CD8-positive, alpha-beta T cell (primary cell): ENCODE measurements at regions of chr14 and their contacts with region 1.

Region 1: DNA sequence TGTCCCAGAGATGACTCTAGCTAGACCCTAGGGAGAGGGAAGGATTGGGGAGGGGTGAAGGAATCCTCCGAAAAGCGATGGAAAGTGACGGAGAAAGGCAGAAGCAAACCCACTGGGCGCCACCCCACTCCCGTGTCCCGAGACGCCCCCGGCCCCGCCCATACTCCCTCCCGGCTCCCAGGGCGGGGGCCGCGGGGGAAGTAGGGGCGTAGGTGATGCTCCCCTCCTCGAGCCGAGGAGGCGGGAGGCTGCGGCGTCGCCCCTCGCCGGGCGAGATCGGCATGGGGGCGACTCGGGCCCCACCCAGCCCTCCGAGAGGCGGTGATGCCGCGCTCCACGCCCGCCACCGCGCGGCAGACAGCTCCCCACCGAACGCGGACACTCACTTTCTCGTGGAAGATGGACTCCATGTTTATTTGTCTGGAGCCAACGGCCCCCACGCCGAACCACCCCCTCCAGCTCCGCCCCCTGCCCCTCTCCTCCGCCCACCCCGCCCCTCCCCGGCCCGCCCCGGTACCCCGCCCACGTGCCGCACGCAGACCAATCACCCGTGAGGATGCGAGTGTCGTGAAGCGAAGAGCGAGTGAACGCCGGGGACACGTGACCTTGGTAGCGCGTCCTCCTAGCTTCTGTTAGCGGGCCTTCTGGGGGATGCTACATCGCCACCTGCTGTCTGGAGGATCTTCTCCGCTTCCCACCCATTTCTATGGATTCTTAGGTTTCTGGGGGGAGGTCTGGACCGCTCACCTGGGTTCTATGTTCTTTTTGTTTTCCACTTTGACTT is at the start of gene ATXN3:
- DNase-seq: peak; percentile 88 to 99 (median 95)
- ATAC-seq: peak; percentile 87
- H3K4me3 ChIP-seq: peak within 1 kb of the TSS; percentile 88 to 96
- H3K4me3 Mint-ChIP-seq: peak within 1 kb of the TSS; percentile 95
- H3K27ac ChIP-seq: peak within 1 kb of the TSS; percentile 77 to 95
- H3K27ac Mint-ChIP-seq: peak within 1 kb of the TSS; percentile 93
- H3K4me1 ChIP-seq: peaks cover 45% of the 10 kb centered on the region
- H3K4me1 Mint-ChIP-seq: peaks cover 58% of the 10 kb centered on the region
- H3K27me3 ChIP-seq: no peaks in the 10 kb centered on the region
- H3K27me3 Mint-ChIP-seq: no peaks in the 10 kb centered on the region
- CTCF ChIP-seq: peak; percentile 68
- total RNA-seq, gene ATXN3: 26.5 to 27.2 TPM

Region 2: DNA sequence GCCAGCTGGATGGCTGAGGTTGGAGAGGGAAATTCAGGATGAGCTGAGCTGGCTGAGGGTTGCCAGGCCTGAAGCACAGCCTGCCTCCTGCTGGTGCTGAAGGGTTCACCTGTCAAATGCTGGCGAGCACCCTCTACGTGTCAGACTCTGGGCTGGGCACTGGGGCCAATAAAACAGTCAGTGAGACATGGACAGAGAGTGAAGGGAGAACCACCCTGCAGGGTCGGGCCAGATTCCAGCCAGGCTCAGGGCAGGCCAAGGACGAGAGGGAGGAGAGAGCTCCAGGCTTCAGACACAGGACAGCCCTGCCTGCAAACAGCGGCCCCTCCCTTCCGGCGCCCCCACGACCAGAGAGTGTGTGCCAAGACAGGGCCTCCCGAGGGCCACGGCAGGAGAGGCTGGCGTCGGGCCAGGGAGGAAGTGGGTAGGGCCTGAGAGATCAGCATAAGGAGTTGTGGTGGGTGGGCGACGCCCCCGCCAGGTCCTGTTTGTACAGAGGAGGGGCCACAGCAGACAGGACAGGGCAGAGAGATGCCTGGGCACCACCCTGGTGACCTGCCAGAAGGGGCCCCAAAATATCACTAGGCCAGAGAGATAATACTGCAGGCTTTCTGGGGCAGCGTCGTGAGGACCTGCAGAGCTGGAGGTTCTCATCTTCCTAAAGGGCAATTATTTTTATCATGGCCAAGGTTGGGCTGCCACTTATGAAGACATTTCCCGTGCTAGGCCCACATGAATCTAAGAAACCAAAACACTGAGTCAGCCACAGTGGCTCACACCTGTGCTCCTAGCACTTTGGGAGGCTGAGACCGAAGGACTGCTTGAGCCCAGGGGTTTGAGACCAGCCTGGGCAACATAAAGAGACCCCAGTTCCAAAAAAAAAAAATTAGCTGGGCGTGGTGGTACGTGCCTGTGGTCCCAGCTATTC is 788.7 kb before region 1 on chr14:
- CTCF ChIA-PET with region 1: no interaction called
- POLR2A ChIA-PET with region 1: no interaction called
- intact Hi-C with region 1: loop called in 1 of 2 experiments (anchors 5 kb)
- DNase-seq: peak; percentile 51 to 98 (median 88)
- ATAC-seq: peak; percentile 34
- H3K4me3 ChIP-seq: peak overlapping the region; percentile 7 to 26
- H3K4me3 Mint-ChIP-seq: peak overlapping the region; percentile 75
- H3K27ac ChIP-seq: peak overlapping the region; percentile 76 to 89
- H3K27ac Mint-ChIP-seq: peak overlapping the region; percentile 96
- H3K4me1 ChIP-seq: peaks cover 77% of the 10 kb centered on the region
- H3K4me1 Mint-ChIP-seq: peaks cover 71% of the 10 kb centered on the region
- H3K27me3 ChIP-seq: no peaks in the 10 kb centered on the region
- H3K27me3 Mint-ChIP-seq: no peaks in the 10 kb centered on the region
- CTCF ChIP-seq: no peak

Region 3: GRCh38 chr14:91510174-91511042 is 595.9 kb before region 1 on chr14 and contains the start of gene PPP4R3A:
- CTCF ChIA-PET with region 1: no interaction called
- POLR2A ChIA-PET with region 1: no interaction called
- intact Hi-C with region 1: loop called (anchors 1 kb)
- DNase-seq: peak; percentile 84 to 99 (median 93)
- ATAC-seq: peak; percentile 86
- H3K4me3 ChIP-seq: peak within 1 kb of the TSS; percentile 48 to 96
- H3K4me3 Mint-ChIP-seq: peak within 1 kb of the TSS; percentile 100
- H3K27ac ChIP-seq: peak within 1 kb of the TSS; percentile 94 to 98
- H3K27ac Mint-ChIP-seq: peak within 1 kb of the TSS; percentile 100
- H3K4me1 ChIP-seq: peaks cover 26% of the 10 kb centered on the region
- H3K4me1 Mint-ChIP-seq: peaks cover 32% of the 10 kb centered on the region
- H3K27me3 ChIP-seq: no peaks in the 10 kb centered on the region
- H3K27me3 Mint-ChIP-seq: no peaks in the 10 kb centered on the region
- CTCF ChIP-seq: no peak
- total RNA-seq, gene PPP4R3A: 279 to 285 TPM

Region 4: GRCh38 chr14:91649930-91650329 is 456.4 kb before region 1 on chr14:
- CTCF ChIA-PET with region 1: no interaction called
- POLR2A ChIA-PET with region 1: no interaction called
- intact Hi-C with region 1: loop called in 1 of 2 experiments (anchors 2 kb)
- DNase-seq: peak in 4 of 9 experiments; percentile 20 to 60 (median 36)
- ATAC-seq: peak; percentile 52
- H3K4me3 ChIP-seq: no peak overlapping the region
- H3K4me3 Mint-ChIP-seq: no peak overlapping the region
- H3K27ac ChIP-seq: no peak overlapping the region
- H3K27ac Mint-ChIP-seq: no peak overlapping the region
- H3K4me1 ChIP-seq: no peaks in the 10 kb centered on the region
- H3K4me1 Mint-ChIP-seq: no peaks in the 10 kb centered on the region
- H3K27me3 ChIP-seq: no peaks in the 10 kb centered on the region
- H3K27me3 Mint-ChIP-seq: no peaks in the 10 kb centered on the region
- CTCF ChIP-seq: peak; percentile 64

Region 5: GRCh38 chr14:92039719-92040430 is 66.5 kb before region 1 on chr14 and contains the start of gene TRIP11:
- CTCF ChIA-PET with region 1: interaction called, 5 read pairs
- POLR2A ChIA-PET with region 1: interaction called, 24 read pairs
- intact Hi-C with region 1: loop called (anchors 1 kb)
- DNase-seq: peak; percentile 93 to 97 (median 95)
- ATAC-seq: peak; percentile 86
- H3K4me3 ChIP-seq: peak within 1 kb of the TSS; percentile 86 to 93
- H3K4me3 Mint-ChIP-seq: peak within 1 kb of the TSS; percentile 95
- H3K27ac ChIP-seq: peak within 1 kb of the TSS; percentile 94 to 96
- H3K27ac Mint-ChIP-seq: peak within 1 kb of the TSS; percentile 100
- H3K4me1 ChIP-seq: peaks cover 34% of the 10 kb centered on the region
- H3K4me1 Mint-ChIP-seq: peaks cover 51% of the 10 kb centered on the region
- H3K27me3 ChIP-seq: no peaks in the 10 kb centered on the region
- H3K27me3 Mint-ChIP-seq: no peaks in the 10 kb centered on the region
- CTCF ChIP-seq: no peak
- total RNA-seq, gene TRIP11: 25.3 to 26.5 TPM

Region 6: DNA sequence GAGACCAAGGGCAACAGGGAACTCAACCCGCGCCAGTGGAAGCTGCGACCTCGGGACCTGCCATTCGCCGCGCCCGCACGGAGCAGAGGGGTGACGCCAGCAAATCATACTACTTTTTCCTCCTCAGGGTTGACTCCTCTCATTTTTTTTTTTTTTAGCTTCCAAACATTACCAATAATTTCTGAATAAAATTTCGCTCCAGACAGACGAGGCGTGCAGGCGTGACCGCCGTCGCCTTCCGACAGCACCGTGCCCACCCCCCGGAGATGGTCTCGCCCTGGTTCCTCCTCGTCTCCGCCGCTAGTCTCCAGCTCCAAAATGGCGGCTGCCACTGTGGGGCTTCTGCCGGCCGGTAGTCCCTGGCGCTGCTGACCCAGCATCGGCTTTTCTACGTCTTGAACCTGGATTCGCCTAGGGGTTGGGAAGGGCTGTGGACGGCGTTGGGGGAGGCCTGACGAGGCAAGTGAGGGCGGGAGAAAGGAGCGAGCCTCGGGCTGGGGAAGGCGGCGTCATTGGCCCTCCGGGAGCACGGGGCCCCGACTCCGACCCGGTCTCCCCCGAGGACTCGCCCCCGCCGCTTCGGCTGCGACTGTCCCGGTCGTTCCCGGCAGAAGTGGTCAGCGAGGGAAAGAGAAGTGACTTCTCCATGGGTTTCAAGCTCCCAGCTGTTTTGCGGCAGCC is 15.5 kb after region 1 on chr14 and contains the starts of genes CPSF2 and NDUFB1:
- CTCF ChIA-PET with region 1: interaction called, 23 read pairs
- POLR2A ChIA-PET with region 1: interaction called, 63 read pairs
- intact Hi-C with region 1: loop called (anchors 1 kb)
- DNase-seq: peak; percentile 70 to 90 (median 83)
- ATAC-seq: peak; percentile 85
- H3K4me3 ChIP-seq: peak within 1 kb of the TSS; percentile 81 to 86
- H3K4me3 Mint-ChIP-seq: peak within 1 kb of the TSS; percentile 99
- H3K27ac ChIP-seq: peak within 1 kb of the TSS; percentile 88 to 89
- H3K27ac Mint-ChIP-seq: peak within 1 kb of the TSS; percentile 99
- H3K4me1 ChIP-seq: peaks cover 31% of the 10 kb centered on the region
- H3K4me1 Mint-ChIP-seq: peaks cover 55% of the 10 kb centered on the region
- H3K27me3 ChIP-seq: no peaks in the 10 kb centered on the region
- H3K27me3 Mint-ChIP-seq: no peaks in the 10 kb centered on the region
- CTCF ChIP-seq: no peak
- total RNA-seq, gene CPSF2: 12.1 to 14.2 TPM
- total RNA-seq, gene NDUFB1: 38.5 to 43.9 TPM

Region 7: DNA sequence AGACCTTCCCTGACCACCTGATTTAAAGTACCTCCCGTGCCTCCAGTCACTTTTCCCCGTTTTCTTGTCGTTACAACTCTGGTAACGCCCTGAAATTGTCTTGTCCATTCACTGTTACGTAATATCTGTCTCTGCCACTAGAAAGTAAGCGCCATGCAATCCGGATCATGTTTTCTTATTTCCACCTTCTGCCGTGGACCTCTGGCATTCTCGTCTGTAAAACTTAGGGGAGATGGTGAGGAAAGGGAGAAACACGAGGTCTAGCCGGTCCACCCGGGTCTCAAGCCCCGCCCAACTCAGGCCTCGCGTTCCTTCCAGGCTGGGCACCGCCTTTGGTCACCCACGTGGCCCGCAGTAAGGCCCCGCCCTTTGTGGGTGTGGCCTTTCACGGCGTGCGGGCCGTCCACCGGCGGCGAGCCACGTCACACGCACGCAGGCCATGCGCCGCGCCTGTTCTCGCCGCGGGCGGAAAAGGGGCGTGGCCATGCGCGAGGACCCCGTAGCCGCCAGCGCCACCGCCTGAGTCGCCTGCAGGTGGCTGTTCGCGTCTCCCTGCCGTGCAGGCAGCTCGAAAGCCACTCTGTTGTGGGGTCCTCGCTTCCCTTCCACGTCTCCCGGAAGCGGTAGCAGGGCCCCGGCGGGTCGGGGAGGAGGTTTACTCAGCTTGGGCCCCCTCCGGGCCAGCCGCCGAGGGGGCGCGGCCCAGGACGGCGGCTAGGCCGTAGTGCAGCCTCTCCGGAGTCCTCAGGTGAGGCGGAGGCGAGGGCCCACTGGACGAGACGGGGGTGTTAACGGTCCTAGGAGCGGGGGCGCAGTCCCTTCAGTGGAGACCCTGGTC is 687.6 kb after region 1 on chr14 and contains the start of gene GOLGA5:
- CTCF ChIA-PET with region 1: no interaction called
- POLR2A ChIA-PET with region 1: no interaction called
- intact Hi-C with region 1: loop called in 1 of 2 experiments (anchors 1 kb)
- DNase-seq: peak; percentile 97 to 99 (median 98)
- ATAC-seq: peak; percentile 94
- H3K4me3 ChIP-seq: peak within 1 kb of the TSS; percentile 92 to 99
- H3K4me3 Mint-ChIP-seq: peak within 1 kb of the TSS; percentile 97
- H3K27ac ChIP-seq: peak within 1 kb of the TSS; percentile 88 to 92
- H3K27ac Mint-ChIP-seq: peak within 1 kb of the TSS; percentile 97
- H3K4me1 ChIP-seq: peaks cover 27% of the 10 kb centered on the region
- H3K4me1 Mint-ChIP-seq: peaks cover 38% of the 10 kb centered on the region
- H3K27me3 ChIP-seq: no peaks in the 10 kb centered on the region
- H3K27me3 Mint-ChIP-seq: no peaks in the 10 kb centered on the region
- CTCF ChIP-seq: no peak
- total RNA-seq, gene GOLGA5: 4.5 to 5.9 TPM